Activated CD4-positive, alpha-beta memory T cell treated with anti-CD3 and anti-CD28 coated beads for 36 hours (primary cell): ENCODE measurements at regions of chr6 and their contacts with region 1.

Region 1: DNA sequence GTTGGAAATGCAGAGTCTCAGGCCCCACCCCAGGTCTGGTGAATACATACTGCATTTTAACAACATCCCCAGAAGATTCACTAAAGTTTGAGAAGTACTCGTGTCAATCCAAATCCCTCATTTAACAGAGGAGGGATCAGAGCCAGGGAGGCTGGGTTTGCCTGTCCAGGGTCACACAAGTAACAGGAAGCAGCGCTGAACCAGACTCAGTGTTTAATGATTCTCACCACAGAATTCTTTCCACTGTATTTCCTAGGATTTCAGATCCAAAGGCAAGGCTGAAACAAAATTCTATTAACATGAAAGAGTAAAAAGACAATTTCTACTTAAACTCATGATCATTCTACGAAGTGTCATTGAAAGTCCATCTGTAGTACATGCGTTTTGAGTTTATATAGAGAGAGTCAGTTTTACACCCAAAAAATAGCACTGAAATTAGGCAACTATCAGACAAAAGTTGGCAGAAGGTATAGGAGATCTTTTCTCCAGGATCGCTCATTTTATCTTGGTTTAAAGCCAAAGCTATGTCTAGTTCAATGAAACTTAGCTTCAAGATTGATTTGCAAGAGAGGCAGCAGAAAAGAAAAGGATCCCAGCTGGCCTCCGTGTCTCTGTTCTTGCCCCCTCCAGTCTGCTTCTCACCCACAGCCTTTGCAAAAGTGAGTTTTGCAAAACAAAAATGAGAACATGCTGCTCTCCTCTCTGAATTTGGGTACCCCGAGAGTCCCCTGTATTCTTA is 6.0 kb upstream of the AGPAT4 start:
- DNase-seq: no peak
- H3K4me3 Mint-ChIP-seq: no peak overlapping the region
- H3K27ac Mint-ChIP-seq: no peak overlapping the region
- H3K4me1 Mint-ChIP-seq: peaks cover 2% of the 10 kb centered on the region
- H3K27me3 Mint-ChIP-seq: peaks cover 2% of the 10 kb centered on the region

Region 2: DNA sequence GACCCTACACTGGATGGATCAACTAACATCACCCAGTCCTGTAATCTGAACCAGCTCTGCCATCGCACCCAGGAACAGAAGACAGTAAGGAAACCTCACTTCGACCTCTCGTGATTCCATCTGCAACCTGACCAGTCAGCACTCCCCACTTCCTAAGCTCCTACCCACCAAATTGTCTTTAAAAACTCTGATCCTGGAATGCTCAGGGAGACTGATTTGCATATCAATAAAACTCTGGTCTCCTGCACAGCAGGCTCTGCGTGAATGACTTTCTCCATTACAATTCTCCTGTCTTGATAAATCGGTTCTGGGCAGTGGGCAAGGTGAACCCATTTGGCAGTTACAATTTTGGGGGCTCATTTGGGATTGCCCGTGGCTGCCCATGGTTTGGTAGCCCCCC is 12.3 kb after region 1 on chr6:
- CTCF ChIA-PET with region 1: no interaction called
- POLR2A ChIA-PET with region 1: no interaction called
- intact Hi-C with region 1: no loop called
- DNase-seq: no peak
- H3K4me3 Mint-ChIP-seq: no peak overlapping the region
- H3K27ac Mint-ChIP-seq: no peak overlapping the region
- H3K4me1 Mint-ChIP-seq: no peaks in the 10 kb centered on the region
- H3K27me3 Mint-ChIP-seq: no peaks in the 10 kb centered on the region

Region 3: GRCh38 chr6:161303628-161304340 is 23.9 kb after region 1 on chr6:
- CTCF ChIA-PET with region 1: no interaction called
- POLR2A ChIA-PET with region 1: no interaction called
- intact Hi-C with region 1: no loop called
- DNase-seq: no peak
- H3K4me3 Mint-ChIP-seq: no peak overlapping the region
- H3K27ac Mint-ChIP-seq: no peak overlapping the region
- H3K4me1 Mint-ChIP-seq: no peaks in the 10 kb centered on the region
- H3K27me3 Mint-ChIP-seq: peaks cover 8% of the 10 kb centered on the region

Region 4: DNA sequence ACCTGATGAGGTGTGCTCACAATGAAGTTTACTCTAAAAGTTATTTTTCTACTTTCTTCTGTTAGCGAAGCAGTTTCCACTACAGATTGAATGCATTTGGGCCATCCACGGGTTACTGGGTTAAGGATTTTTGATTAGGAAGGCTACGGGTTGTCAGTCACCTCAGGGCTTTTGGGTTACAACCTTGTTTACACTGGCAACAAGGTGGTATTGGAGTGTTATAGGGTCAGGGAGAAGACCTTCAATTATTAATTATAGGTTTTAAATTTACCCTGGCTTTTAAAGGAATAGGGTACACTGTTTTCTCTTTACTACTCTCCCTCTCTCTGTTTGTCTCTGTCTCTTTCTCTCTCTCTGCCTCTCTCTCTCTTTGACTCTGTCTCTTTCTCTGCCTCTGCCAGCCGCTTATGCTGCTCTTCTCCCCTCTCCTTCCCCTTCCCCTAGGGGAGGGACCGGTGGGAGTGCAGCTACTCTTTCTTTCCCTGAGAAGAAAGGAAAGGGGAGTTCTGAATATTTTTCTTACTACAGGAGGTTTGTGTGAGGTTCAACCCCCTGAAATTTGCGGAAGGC is 34.2 kb after region 1 on chr6:
- CTCF ChIA-PET with region 1: no interaction called
- POLR2A ChIA-PET with region 1: no interaction called
- intact Hi-C with region 1: loop called (anchors 5 kb)
- DNase-seq: no peak
- H3K4me3 Mint-ChIP-seq: no peak overlapping the region
- H3K27ac Mint-ChIP-seq: no peak overlapping the region
- H3K4me1 Mint-ChIP-seq: peaks cover 4% of the 10 kb centered on the region
- H3K27me3 Mint-ChIP-seq: peaks cover 1% of the 10 kb centered on the region